Aorta (tissue), 5 donors: ENCODE measurements at regions of chr1 and their contacts with region 1.

Region 1: DNA sequence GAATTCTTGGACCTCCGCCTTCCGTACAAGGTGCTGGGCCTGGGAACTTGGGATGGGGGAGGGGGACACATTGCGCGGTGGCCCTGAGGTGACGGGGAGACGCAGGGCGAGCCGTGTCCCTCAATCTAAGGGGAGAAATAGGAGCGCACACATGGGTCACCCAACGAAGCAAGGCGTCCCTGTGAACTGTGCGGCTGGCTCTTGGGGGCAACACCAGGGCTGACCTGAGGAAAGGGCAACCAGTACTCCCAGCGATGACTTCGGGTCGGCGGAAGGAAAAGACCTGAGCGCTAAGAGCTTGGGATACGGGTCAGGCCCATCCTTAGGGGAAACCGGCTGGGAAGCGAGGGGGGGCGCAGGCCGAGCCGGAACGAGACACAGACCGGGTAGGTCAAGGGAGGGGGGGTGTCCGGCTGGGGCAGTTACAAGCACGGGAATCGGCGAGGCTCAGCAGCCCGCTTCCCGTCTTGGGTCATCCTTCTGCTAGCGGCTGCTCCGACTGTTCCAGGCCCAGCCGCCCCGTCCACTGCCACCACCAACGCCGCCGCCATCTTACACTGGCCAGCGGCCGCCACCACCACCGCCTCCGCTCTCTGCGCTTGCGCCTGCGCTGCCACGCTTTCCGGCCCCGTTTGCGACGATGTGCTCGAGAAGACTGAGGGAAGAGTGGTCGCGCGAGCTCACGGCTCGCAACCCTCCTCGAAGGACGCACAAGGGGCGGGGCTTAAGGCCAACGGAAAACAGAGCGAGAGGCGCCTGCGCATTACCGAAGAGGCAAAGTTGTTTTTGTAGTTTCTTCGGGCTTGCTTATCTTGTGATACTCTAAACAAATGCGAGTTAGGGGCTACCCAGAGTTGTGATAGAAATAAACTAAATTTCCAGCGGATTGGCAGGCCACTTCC is at the start of gene DCAF8:
- DNase-seq: peak; percentile 99 to 100
- ATAC-seq: peak; percentile 99
- H3K4me3 ChIP-seq: peak within 1 kb of the TSS; percentile 69 to 93
- H3K27ac ChIP-seq: peak within 1 kb of the TSS; percentile 72 to 87
- H3K4me1 ChIP-seq: peaks cover 0 to 7% of the 10 kb centered on the region in 2 donors
- H3K27me3 ChIP-seq: no peaks in the 10 kb centered on the region
- total RNA-seq, gene DCAF8: 134 to 152 TPM

Region 2: DNA sequence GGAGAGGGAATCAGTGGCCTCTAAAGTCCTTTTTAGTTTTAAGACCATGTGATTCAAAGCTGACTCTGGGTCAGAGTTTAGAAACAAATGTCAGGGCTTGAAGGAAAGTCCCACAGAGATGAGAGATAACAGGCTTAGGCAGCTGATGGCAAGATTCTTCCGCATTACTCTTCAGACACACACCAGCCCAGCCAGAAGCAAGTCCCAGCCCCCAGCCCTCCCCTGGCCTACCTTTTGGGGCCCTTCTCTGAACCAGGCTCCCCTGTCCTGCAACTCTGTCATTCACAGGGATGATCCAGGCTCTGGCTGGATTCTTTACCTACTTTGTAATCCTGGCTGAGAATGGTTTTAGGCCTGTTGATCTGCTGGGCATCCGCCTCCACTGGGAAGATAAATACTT is 84.9 kb before region 1 on chr1:
- intact Hi-C with region 1: no loop called
- DNase-seq: no peak
- ATAC-seq: no peak
- H3K4me3 ChIP-seq: no peak overlapping the region
- H3K27ac ChIP-seq: no peak overlapping the region
- H3K4me1 ChIP-seq: no peaks in the 10 kb centered on the region
- H3K27me3 ChIP-seq: no peaks in the 10 kb centered on the region

Region 3: DNA sequence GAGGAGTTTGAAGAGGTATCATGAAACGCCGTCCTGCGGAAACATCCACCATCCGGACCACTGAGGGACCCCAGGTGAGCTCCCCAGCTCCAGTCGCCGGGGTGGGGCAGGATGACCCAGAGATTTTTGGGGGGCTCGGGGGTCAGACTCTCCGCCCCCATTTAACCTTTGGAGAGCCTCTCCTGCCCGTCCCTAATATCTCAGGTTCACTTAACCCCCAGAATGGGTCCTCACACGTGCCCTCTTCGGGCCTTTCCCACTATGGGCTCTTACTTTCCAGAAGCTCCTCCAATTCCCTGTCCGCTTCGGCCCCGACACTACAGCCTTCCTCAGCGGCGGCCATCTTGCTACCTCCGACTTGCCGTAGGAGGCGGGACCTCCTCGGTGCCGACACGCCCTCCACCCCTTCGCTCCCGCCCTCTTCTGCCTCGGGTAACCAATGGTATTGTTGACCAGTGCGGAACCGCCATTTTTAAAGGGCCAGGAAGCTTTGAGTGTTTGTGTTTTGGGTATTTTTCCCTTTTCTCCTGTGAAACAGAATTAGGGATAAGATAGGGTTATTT is 22.7 kb after region 1 on chr1 and contains the start of gene PEX19:
- intact Hi-C with region 1: loop called in 1 of 2 experiments (anchors 2 kb)
- DNase-seq: peak; percentile 96 to 97
- ATAC-seq: peak; percentile 99
- H3K4me3 ChIP-seq: peak within 1 kb of the TSS; percentile 73 to 83
- H3K27ac ChIP-seq: peak within 1 kb of the TSS in 1 of 2 donors; percentile 58
- H3K4me1 ChIP-seq: peaks cover 0 to 7% of the 10 kb centered on the region in 2 donors
- H3K27me3 ChIP-seq: no peaks in the 10 kb centered on the region
- total RNA-seq, gene PEX19: 44.8 to 55.1 TPM